Uterus (tissue), 4 donors: ENCODE measurements at regions of chr19 and their contacts with region 1.

Region 1: GRCh38 chr19:4728871-4729270 is 5.2 kb upstream of the DPP9 start:
- DNase-seq: no peak
- H3K4me3 ChIP-seq: no peak overlapping the region
- H3K27ac ChIP-seq: no peak overlapping the region
- H3K4me1 ChIP-seq: no peaks in the 10 kb centered on the region
- H3K27me3 ChIP-seq: no peaks in the 10 kb centered on the region
- CTCF ChIP-seq: no peak
- POLR2A ChIP-seq: no peak

Region 2: GRCh38 chr19:4638828-4639530 is 89.9 kb before region 1 on chr19 and contains the start of gene TNFAIP8L1:
- intact Hi-C with region 1: no loop called
- DNase-seq: peak; percentile 94 to 96
- H3K4me3 ChIP-seq: peak within 1 kb of the TSS; percentile 63 to 66
- H3K27ac ChIP-seq: peak within 1 kb of the TSS; percentile 66 to 76
- H3K4me1 ChIP-seq: peaks cover 0 to 18% of the 10 kb centered on the region in 2 donors
- H3K27me3 ChIP-seq: no peaks in the 10 kb centered on the region
- CTCF ChIP-seq: no peak
- POLR2A ChIP-seq: no peak
- total RNA-seq, gene TNFAIP8L1: 0.77 to 20.6 (median 9.1) TPM

Region 3: GRCh38 chr19:4791170-4792018 is 62.5 kb after region 1 on chr19 and contains the start of gene FEM1A:
- intact Hi-C with region 1: loop called (anchors 5 kb)
- DNase-seq: peak; percentile 99 to 100
- H3K4me3 ChIP-seq: peak within 1 kb of the TSS; percentile 83 to 95
- H3K27ac ChIP-seq: peak within 1 kb of the TSS; percentile 86 to 96
- H3K4me1 ChIP-seq: peaks cover 0 to 15% of the 10 kb centered on the region in 2 donors
- H3K27me3 ChIP-seq: no peaks in the 10 kb centered on the region
- CTCF ChIP-seq: peak; percentile 94 to 99 (median 97)
- POLR2A ChIP-seq: peak; percentile 56 to 75
- total RNA-seq, gene FEM1A: 9.4 to 12.4 (median 10.6) TPM